GM10248 (cell line): ENCODE measurements at regions of chr10 and their contacts with region 1.

Region 1: GRCh38 chr10:45249978-45250693 is 65.3 kb downstream of the OR13A1 start:
- DNase-seq: peak; percentile 35
- CTCF ChIP-seq: peak; percentile 42

Region 2: DNA sequence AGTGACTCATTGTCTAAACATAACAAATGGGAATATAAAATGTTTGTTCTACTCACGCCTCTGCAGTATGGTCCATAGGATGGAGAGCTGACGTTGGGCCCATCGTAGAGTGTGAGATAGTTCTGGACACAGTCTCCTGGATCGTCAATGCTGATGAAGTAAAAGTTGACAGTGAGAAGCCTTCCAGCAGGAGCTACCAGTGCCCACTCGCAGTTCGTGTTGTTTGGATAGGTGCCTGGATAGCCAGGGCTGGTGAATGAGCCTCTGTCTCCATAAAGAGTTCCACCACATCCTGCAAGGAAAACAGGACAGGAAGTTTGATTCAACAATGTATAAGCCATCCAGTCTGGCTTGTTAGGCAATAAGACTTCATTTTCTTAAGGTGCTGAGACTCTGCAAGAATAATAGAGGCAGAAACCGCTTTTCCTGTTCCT is 14.3 kb before region 1 on chr10:
- CTCF ChIA-PET with region 1: interaction called, 29 read pairs
- POLR2A ChIA-PET with region 1: no interaction called
- DNase-seq: no peak
- CTCF ChIP-seq: no peak

Region 3: GRCh38 chr10:46030091-46030937 is 780.2 kb after region 1 on chr10 and contains the start of gene NCOA4:
- CTCF ChIA-PET with region 1: interaction called, 15 read pairs
- POLR2A ChIA-PET with region 1: no interaction called
- DNase-seq: peak; percentile 98
- CTCF ChIP-seq: peak; percentile 89